Caco-2 (cell line): ENCODE measurements at regions of chr7 and their contacts with region 1.

Region 1: GRCh38 chr7:34751725-34752643 is 94.0 kb downstream of the NPSR1 start:
- DNase-seq: peak; percentile 61 to 68
- H3K4me3 ChIP-seq: no peak overlapping the region
- H3K4me3 Mint-ChIP-seq: peak overlapping the region; percentile 54
- H3K27ac Mint-ChIP-seq: peak overlapping the region; percentile 89
- H3K4me1 ChIP-seq: peaks cover 31% of the 10 kb centered on the region
- H3K4me1 Mint-ChIP-seq: peaks cover 12% of the 10 kb centered on the region
- H3K27me3 ChIP-seq: no peaks in the 10 kb centered on the region
- H3K27me3 Mint-ChIP-seq: no peaks in the 10 kb centered on the region
- CTCF ChIP-seq: no peak

Region 2: DNA sequence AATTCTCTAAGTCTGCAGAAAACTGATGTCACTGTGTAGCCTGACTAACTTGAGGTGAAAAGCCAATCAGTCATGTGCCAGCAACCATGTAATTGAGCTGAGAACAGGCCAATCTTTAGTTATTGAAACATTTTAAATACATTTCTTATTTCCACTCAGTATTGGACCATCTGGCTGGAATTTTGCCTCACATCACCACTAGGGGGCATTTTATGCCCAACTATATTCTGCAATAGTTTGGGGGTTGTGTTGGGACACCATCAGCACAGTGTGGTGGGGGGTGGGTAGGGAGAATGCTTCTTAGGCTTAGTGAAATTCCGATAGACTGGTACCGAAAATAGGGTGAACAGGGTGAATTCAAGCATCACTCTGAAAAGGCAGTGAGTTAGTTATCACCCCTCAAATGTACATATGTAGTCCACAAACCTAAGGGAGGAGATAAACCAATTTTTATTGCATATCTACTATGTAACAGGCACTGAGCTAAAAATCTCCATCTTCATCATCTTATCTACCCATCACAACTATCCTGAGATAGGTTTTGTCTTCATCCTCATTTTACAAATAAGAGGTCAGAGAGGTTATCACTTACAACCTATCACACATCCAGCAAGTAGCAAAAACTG is 76.1 kb before region 1 on chr7:
- CTCF ChIA-PET with region 1: no interaction called
- POLR2A ChIA-PET with region 1: no interaction called
- intact Hi-C with region 1: loop called (anchors 2 kb)
- DNase-seq: peak in 1 of 2 experiments; percentile 35
- H3K4me3 ChIP-seq: no peak overlapping the region
- H3K4me3 Mint-ChIP-seq: no peak overlapping the region
- H3K27ac Mint-ChIP-seq: no peak overlapping the region
- H3K4me1 ChIP-seq: no peaks in the 10 kb centered on the region
- H3K4me1 Mint-ChIP-seq: peaks cover 6% of the 10 kb centered on the region
- H3K27me3 ChIP-seq: no peaks in the 10 kb centered on the region
- H3K27me3 Mint-ChIP-seq: no peaks in the 10 kb centered on the region
- CTCF ChIP-seq: peak; percentile 47 to 81

Region 3: GRCh38 chr7:34806831-34807230 is 54.8 kb after region 1 on chr7:
- CTCF ChIA-PET with region 1: no interaction called
- POLR2A ChIA-PET with region 1: no interaction called
- intact Hi-C with region 1: no loop called
- DNase-seq: no peak
- H3K4me3 ChIP-seq: no peak overlapping the region
- H3K4me3 Mint-ChIP-seq: no peak overlapping the region
- H3K27ac Mint-ChIP-seq: no peak overlapping the region
- H3K4me1 ChIP-seq: no peaks in the 10 kb centered on the region
- H3K4me1 Mint-ChIP-seq: no peaks in the 10 kb centered on the region
- H3K27me3 ChIP-seq: no peaks in the 10 kb centered on the region
- H3K27me3 Mint-ChIP-seq: peaks cover 8% of the 10 kb centered on the region
- CTCF ChIP-seq: no peak